Naive thymus-derived CD8-positive, alpha-beta T cell (primary cell): ENCODE measurements at regions of chr16 and their contacts with region 1.

Region 1: GRCh38 chr16:56994311-56994710 is 5.0 kb downstream of the NLRC5 start:
- DNase-seq: no peak
- ATAC-seq: peak in 1 of 2 donors; percentile 14
- H3K4me3 Mint-ChIP-seq: peak overlapping the region; percentile 76 to 100 (median 87)
- H3K27ac Mint-ChIP-seq: peak overlapping the region; percentile 86 to 98 (median 96)
- H3K4me1 Mint-ChIP-seq: peaks cover 46 to 88% (median 78%) of the 10 kb centered on the region in 4 donors
- H3K27me3 Mint-ChIP-seq: no peaks in the 10 kb centered on the region

Region 2: DNA sequence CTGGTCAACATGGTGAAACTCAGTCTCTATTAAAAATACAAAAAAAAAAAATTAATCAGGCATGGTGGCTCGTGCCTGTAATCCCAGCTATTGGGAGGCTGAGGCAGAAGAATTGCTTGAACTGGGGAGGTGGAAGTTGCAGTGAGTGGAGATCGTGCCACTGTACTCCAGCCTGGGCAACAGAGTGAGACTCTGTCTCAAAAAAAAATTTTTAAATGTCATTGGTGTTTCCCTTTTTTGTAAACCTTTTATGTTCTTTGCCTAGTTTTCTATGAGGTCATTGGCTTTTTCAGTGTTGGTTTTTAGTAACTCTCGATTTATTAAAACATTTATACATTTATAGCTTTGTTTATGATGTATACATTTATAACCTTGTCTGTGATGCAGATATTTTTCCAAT is 13.2 kb after region 1 on chr16:
- POLR2A ChIA-PET with region 1: interaction called, 127 read pairs
- DNase-seq: no peak
- ATAC-seq: peak in 1 of 2 donors; percentile 20
- H3K4me3 Mint-ChIP-seq: peak overlapping the region in 5 of 10 donors; percentile 4 to 48 (median 43)
- H3K27ac Mint-ChIP-seq: peak overlapping the region in 9 of 10 donors; percentile 35 to 96 (median 77)
- H3K4me1 Mint-ChIP-seq: peaks cover 35 to 89% (median 77%) of the 10 kb centered on the region in 4 donors
- H3K27me3 Mint-ChIP-seq: no peaks in the 10 kb centered on the region